T-cell (primary cell): ENCODE measurements at regions of chr17 and their contacts with region 1.

Region 1: DNA sequence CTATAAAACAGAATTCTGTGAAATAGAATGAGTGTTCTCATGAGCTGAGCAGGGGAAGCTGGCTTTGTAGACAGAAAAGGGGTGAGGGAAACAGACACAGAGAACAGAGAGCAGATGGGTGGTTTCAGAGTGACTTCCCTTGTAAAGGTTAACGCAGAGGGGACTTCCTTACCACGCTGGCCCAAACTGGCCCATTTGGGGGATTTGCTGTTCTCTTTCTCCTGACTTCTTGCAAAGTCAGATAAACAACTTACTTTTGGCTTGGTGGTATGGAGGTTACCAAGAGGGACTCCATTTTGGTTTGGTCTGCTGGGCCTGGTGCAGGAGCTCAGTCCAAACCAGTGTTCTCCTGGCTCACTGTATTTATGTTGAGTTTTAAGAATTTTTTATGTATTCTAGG is 48.4 kb downstream of the SEC14L1 start:
- DNase-seq: peak in 15 of 35 experiments; percentile 5 to 58 (median 21)
- ATAC-seq: peak; percentile 43 to 88 (median 69)
- H3K4me3 ChIP-seq: no peak overlapping the region
- H3K4me3 Mint-ChIP-seq: peak overlapping the region in 1 of 3 donors; percentile 52
- H3K27ac ChIP-seq: peak overlapping the region; percentile 34
- H3K27ac Mint-ChIP-seq: peak overlapping the region; percentile 57 to 82
- H3K4me1 ChIP-seq: peaks cover 29 to 36% of the 10 kb centered on the region in 2 experiments
- H3K4me1 Mint-ChIP-seq: peaks cover 24 to 38% (median 35%) of the 10 kb centered on the region in 3 donors
- H3K27me3 ChIP-seq: no peaks in the 10 kb centered on the region
- H3K27me3 Mint-ChIP-seq: no peaks in the 10 kb centered on the region

Region 2: DNA sequence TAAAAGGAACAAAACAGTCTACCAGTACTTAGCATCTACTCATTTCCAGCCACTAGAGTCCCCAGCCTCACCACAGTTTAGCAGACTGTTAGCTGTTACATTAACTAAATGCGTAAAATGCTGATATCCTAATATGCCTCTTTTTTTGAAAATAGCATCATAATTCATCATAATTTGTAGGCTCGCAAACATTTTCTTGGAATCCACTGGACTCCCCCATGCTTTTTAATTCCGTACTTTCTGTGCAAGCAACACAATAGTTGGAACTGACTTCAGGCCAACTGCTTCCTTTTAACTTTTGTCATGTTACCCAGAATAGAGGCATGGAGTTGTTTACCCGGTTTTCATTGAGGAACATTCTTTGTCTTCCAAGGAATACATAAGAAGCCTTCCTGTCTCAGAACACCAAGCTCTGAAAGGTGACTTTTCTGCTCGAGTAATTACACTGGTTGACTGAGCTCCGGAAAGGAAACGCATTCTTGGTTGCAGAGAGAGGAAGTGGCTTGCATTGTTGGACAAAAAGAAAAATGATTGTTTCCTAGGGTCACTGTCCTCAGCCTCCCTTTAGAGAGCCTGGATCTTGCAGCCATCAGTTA is 79.3 kb before region 1 on chr17:
- CTCF ChIA-PET with region 1: no interaction called
- POLR2A ChIA-PET with region 1: interaction called in 1 of 2 experiments, 12 read pairs
- DNase-seq: no peak
- ATAC-seq: no peak
- H3K4me3 ChIP-seq: no peak overlapping the region
- H3K4me3 Mint-ChIP-seq: peak overlapping the region in 1 of 3 donors; percentile 32
- H3K27ac ChIP-seq: no peak overlapping the region
- H3K27ac Mint-ChIP-seq: peak overlapping the region; percentile 45 to 64
- H3K4me1 ChIP-seq: peaks cover 8 to 21% of the 10 kb centered on the region in 2 experiments
- H3K4me1 Mint-ChIP-seq: peaks cover 35% of the 10 kb centered on the region in 3 donors
- H3K27me3 ChIP-seq: peaks cover 0 to 6% of the 10 kb centered on the region in 2 experiments
- H3K27me3 Mint-ChIP-seq: no peaks in the 10 kb centered on the region